ENCODE measurements at regions of chr12 and their contacts with region 1.

Region 1: GRCh38 chr12:96194971-96195844 is 1.0 kb downstream of the ELK3 start:
- DNase-seq: peak; percentile 83
- H3K4me3 ChIP-seq: peak overlapping the region; percentile 65 to 90 (median 68)
- H3K27ac ChIP-seq: peak overlapping the region; percentile 100
- H3K4me1 ChIP-seq: peaks cover 40% of the 10 kb centered on the region
- H3K27me3 ChIP-seq: no peaks in the 10 kb centered on the region
- CTCF ChIP-seq: no peak
- POLR2A ChIP-seq: peak; percentile 68

Region 2: GRCh38 chr12:95608252-95609033 is 586.8 kb before region 1 on chr12:
- CTCF ChIA-PET with region 1: no interaction called
- POLR2A ChIA-PET with region 1: no interaction called
- dilution Hi-C with region 1: no loop called
- intact Hi-C with region 1: loop called (anchors 5 kb)
- DNase-seq: peak; percentile 91
- H3K4me3 ChIP-seq: no peak overlapping the region
- H3K27ac ChIP-seq: peak overlapping the region; percentile 91
- H3K4me1 ChIP-seq: peaks cover 74% of the 10 kb centered on the region
- H3K27me3 ChIP-seq: no peaks in the 10 kb centered on the region
- CTCF ChIP-seq: no peak
- POLR2A ChIP-seq: no peak

Region 3: DNA sequence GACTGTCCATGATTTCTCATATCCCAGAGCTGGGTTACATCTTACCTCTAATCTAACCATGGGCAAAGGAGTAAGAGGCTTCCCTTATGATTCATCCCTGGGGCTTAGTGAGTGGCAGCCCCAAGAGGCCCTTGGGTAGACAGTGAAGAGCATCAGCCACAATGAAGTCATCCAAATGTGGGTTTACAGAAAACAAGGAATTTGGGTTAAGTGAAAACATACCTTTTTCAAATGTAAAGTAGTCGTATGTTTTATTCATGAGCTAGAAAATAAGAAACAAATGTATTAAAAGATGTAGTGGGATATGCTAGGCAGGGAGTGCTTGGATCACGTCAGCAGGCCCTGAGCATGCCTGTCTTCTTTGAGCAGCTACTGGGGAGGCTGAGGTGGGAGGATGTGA is 55.0 kb before region 1 on chr12:
- CTCF ChIA-PET with region 1: interaction called, 4 read pairs
- POLR2A ChIA-PET with region 1: no interaction called
- dilution Hi-C with region 1: no loop called
- intact Hi-C with region 1: loop called (anchors 1 kb)
- DNase-seq: no peak
- H3K4me3 ChIP-seq: no peak overlapping the region
- H3K27ac ChIP-seq: no peak overlapping the region
- H3K4me1 ChIP-seq: peaks cover 63% of the 10 kb centered on the region
- H3K27me3 ChIP-seq: no peaks in the 10 kb centered on the region
- CTCF ChIP-seq: no peak
- POLR2A ChIP-seq: no peak

Region 4: GRCh38 chr12:96177013-96177412 is 18.2 kb before region 1 on chr12:
- CTCF ChIA-PET with region 1: interaction called, 5 read pairs
- POLR2A ChIA-PET with region 1: no interaction called
- dilution Hi-C with region 1: no loop called
- intact Hi-C with region 1: loop called (anchors 2 kb)
- DNase-seq: peak; percentile 91
- H3K4me3 ChIP-seq: no peak overlapping the region
- H3K27ac ChIP-seq: peak overlapping the region; percentile 2
- H3K4me1 ChIP-seq: peaks cover 14% of the 10 kb centered on the region
- H3K27me3 ChIP-seq: no peaks in the 10 kb centered on the region
- CTCF ChIP-seq: no peak
- POLR2A ChIP-seq: no peak

Region 5: GRCh38 chr12:96219698-96220206 is 24.5 kb after region 1 on chr12:
- CTCF ChIA-PET with region 1: interaction called, 17 read pairs
- POLR2A ChIA-PET with region 1: interaction called, 8 read pairs
- dilution Hi-C with region 1: no loop called
- intact Hi-C with region 1: loop called (anchors 1 kb)
- DNase-seq: peak; percentile 96
- H3K4me3 ChIP-seq: no peak overlapping the region
- H3K27ac ChIP-seq: peak overlapping the region; percentile 90
- H3K4me1 ChIP-seq: peaks cover 93% of the 10 kb centered on the region
- H3K27me3 ChIP-seq: no peaks in the 10 kb centered on the region
- CTCF ChIP-seq: no peak
- POLR2A ChIP-seq: peak; percentile 63